PC-3 (cell line): ENCODE measurements at regions of chr3 and their contacts with region 1.

Region 1: DNA sequence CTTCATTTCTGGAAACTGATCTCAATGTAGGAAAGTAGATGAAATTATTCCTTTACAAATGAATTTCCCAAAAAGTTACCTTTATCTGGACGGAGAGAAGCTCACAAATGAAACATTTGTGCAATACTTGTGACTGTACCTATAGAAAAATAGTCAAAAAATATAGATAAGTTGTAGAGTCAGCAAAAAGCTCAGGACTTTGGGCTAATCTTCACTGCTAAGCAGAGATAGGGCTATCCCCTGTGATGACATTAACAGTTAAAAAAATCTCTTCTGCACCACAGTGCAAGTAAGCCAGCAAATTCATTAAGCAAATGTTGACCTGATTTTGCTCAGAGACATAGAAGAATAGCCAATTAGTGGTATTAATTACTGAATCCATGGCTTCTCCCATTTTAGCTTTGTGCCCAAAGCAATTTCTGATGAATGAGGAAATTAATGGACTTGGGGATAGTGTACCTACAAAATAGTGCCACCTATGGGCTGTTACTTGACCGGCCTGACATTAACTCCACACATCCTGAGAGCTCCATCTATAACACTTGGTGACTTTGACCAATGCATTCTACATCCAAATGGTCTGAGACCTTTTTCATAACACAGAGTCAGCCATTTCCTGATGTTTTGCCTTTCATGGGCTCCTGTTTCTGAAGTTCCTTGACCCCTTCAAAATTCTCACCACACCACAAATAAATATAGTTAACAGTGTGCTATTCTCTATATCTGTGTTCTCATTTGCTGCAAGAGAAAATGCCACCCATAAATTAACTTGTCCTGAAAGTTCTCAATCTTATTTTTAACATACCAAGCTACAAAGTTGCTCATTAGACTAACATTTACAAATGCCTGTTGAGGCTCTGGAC is 105.0 kb downstream of the SSR3 start:
- DNase-seq: peak; percentile 64
- ATAC-seq: peak; percentile 88
- H3K4me3 ChIP-seq: no peak overlapping the region
- H3K27ac ChIP-seq: no peak overlapping the region
- H3K4me1 ChIP-seq: no peaks in the 10 kb centered on the region
- H3K27me3 ChIP-seq: peaks cover 23% of the 10 kb centered on the region
- CTCF ChIP-seq: peak; percentile 82

Region 2: GRCh38 chr3:156151824-156152428 is 298.0 kb before region 1 on chr3:
- CTCF ChIA-PET with region 1: interaction called, 3 read pairs
- POLR2A ChIA-PET with region 1: no interaction called
- intact Hi-C with region 1: loop called (anchors 1 kb)
- DNase-seq: peak; percentile 80
- ATAC-seq: peak; percentile 80
- H3K4me3 ChIP-seq: no peak overlapping the region
- H3K27ac ChIP-seq: no peak overlapping the region
- H3K4me1 ChIP-seq: no peaks in the 10 kb centered on the region
- H3K27me3 ChIP-seq: no peaks in the 10 kb centered on the region
- CTCF ChIP-seq: peak; percentile 88

Region 3: DNA sequence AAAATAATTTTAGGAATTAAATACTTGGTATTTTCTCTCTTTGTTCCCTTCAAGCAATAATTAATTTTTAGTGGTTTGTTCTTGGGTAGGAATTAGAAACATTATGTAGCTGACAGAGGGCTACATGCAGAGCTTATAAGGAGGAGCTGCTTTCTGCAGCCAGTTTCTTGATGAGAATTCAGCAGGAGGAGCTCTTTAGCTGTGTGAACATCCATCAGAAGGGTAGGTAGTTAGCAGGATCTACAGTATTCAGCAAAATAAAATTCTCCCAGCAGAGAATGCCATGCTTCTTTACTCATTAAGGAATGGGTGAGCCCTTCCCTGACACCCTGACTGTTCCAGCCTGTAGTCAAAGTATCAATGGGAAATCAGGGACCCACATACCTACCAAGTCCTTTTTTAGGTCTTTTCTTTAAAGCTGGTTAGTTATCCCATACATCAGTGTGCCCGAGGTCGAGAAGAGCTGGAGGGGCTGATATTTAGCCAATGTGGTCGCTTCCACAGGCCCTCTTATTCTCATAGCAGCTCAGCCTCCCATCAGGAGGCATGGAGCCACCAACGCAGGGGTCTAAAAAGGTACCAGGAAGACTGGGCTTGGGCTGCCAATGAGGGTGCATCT is 275.6 kb before region 1 on chr3:
- CTCF ChIA-PET with region 1: interaction called, 15 read pairs
- POLR2A ChIA-PET with region 1: no interaction called
- intact Hi-C with region 1: loop called (anchors 2 kb)
- DNase-seq: peak; percentile 65
- ATAC-seq: peak; percentile 85
- H3K4me3 ChIP-seq: no peak overlapping the region
- H3K27ac ChIP-seq: no peak overlapping the region
- H3K4me1 ChIP-seq: no peaks in the 10 kb centered on the region
- H3K27me3 ChIP-seq: no peaks in the 10 kb centered on the region
- CTCF ChIP-seq: peak; percentile 60

Region 4: DNA sequence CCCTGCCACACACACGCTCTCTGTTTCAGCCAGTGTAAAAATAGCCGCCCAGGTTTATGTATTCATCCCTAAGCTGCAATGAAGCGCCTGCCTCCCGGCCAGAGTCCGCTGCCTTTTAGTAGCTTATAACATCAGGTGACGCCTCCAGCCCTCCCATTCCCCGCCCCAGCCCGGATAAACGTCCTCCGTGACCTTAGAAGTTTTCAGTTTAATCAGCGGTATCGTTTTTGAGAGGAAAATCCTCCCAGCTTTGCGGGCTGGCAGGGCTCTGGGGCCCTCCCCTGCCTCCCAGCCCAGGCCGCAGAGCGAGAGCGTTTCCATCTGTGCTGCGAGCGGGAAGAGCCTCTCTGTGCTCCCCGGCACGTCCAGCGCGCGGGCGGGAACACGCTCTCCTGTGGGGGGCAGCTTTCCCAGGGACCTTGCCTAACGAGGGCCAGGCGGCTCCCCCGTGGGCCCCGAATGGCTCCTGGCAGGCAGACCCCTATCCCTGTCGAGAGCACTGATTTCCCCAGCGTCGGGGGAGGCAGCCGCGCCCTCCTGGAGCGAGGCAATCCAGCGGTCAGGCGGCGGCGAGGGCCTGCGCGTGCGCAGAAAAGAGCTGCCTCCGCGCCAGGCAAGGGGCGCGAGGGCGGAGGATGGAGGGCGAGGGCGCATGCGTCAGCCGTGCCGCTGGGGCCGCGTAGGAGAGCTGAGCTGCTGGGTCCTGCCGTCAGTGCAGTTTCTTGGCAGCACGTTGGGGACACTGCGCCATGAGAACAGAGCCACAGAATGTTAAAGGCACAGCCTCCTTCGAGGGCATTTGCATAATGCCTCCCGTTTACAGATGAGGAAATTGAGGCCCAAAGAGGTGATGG is 638.9 kb after region 1 on chr3:
- CTCF ChIA-PET with region 1: no interaction called
- POLR2A ChIA-PET with region 1: no interaction called
- intact Hi-C with region 1: loop called (anchors 2 kb)
- DNase-seq: peak; percentile 93
- ATAC-seq: peak; percentile 84
- H3K4me3 ChIP-seq: peak overlapping the region; percentile 70
- H3K27ac ChIP-seq: peak overlapping the region; percentile 98
- H3K4me1 ChIP-seq: peaks cover 41% of the 10 kb centered on the region
- H3K27me3 ChIP-seq: no peaks in the 10 kb centered on the region
- CTCF ChIP-seq: peak; percentile 14; the same call in 1 of the 2 replicates